ENCODE measurements at regions of chr12 and their contacts with region 1.

Region 1: DNA sequence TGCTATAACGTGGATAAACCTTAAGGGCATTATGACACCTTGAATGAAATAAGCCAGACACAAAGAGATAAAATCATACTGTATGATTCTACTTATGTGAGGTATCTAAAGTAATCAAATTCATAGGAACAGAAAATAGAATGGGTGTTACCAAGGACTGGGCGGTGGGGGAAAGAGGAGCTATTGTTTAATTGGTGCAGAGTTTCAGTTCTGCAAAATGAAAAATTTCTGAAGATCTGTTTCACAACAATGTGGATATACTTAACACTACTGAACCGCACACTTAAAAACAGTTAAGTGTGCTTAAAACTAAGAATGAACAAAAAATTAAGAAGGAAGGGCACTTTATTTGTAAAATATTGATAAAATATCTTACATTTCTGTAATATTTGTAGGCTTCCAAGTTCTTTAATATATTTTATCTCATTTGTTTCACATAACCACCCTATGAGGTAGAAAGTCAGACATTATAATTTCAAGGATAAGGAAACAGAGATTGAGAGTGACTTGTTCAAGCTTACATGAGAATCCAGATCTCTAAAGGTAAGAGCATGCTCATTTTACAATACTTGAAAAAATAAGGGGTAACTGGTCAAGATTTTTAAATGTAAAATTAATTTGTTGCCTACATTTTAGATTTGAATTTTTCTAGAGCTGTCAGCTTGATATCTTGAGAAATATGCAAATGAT is 14.9 kb downstream of the LTA4H start:
- DNase-seq: peak; percentile 82
- H3K4me3 ChIP-seq: peak overlapping the region; percentile 49
- H3K27ac ChIP-seq: peak overlapping the region; percentile 93
- H3K4me1 ChIP-seq: peaks cover 32% of the 10 kb centered on the region
- CTCF ChIP-seq: no peak

Region 2: GRCh38 chr12:96007729-96008128 is 12.7 kb before region 1 on chr12:
- CTCF ChIA-PET with region 1: interaction called, 3 read pairs
- POLR2A ChIA-PET with region 1: interaction called, 10 read pairs
- intact Hi-C with region 1: no loop called
- DNase-seq: no peak
- H3K4me3 ChIP-seq: no peak overlapping the region
- H3K27ac ChIP-seq: no peak overlapping the region
- H3K4me1 ChIP-seq: no peaks in the 10 kb centered on the region
- CTCF ChIP-seq: no peak

Region 3: GRCh38 chr12:96035278-96036236 is 15.1 kb after region 1 on chr12 and contains the start of gene LTA4H:
- CTCF ChIA-PET with region 1: no interaction called
- POLR2A ChIA-PET with region 1: interaction called, 35 read pairs
- intact Hi-C with region 1: loop called (anchors 2 kb)
- DNase-seq: peak; percentile 99
- H3K4me3 ChIP-seq: peak within 1 kb of the TSS; percentile 94
- H3K27ac ChIP-seq: peak within 1 kb of the TSS; percentile 59
- H3K4me1 ChIP-seq: peaks cover 22% of the 10 kb centered on the region
- CTCF ChIP-seq: no peak
- total RNA-seq, gene LTA4H: 75.6 and 86.7 TPM in 2 replicates

Region 4: DNA sequence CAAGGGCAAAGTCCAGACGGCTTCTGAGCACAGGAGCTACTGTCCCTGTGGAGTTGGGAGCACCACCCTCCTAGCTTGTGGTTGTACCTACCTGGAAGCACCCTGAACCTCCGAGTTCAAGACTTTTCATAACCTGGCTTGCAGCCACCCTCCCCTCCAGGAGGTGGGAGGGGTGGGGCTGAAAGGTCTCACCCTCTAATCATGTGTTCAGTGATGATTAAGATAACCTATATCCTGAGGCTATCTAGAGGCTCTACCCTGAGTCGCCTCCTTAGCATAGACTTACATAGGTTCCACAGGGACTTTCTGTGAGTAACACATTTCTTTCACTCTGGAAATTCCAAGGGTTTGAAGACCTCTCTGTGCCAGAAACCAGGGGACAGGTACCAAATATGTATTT is 615.4 kb after region 1 on chr12:
- CTCF ChIA-PET with region 1: no interaction called
- POLR2A ChIA-PET with region 1: no interaction called
- intact Hi-C with region 1: no loop called
- DNase-seq: no peak
- H3K4me3 ChIP-seq: no peak overlapping the region
- H3K27ac ChIP-seq: no peak overlapping the region
- H3K4me1 ChIP-seq: no peaks in the 10 kb centered on the region
- CTCF ChIP-seq: no peak

Measured in OCI-LY7 (cell line).